Natural killer cell (primary cell): ENCODE measurements at regions of chr7 and their contacts with region 1.

Region 1: GRCh38 chr7:139340037-139340807 is 915 bp upstream of the FMC1 start:
- DNase-seq: peak; percentile 94 to 100
- ATAC-seq: peak; percentile 73 to 91 (median 81)
- H3K4me3 ChIP-seq: peak overlapping the region; percentile 89
- H3K4me3 Mint-ChIP-seq: peak overlapping the region; percentile 98
- H3K27ac ChIP-seq: peak overlapping the region; percentile 98
- H3K27ac Mint-ChIP-seq: peak overlapping the region; percentile 100
- H3K4me1 ChIP-seq: peaks cover 15% of the 10 kb centered on the region
- H3K4me1 Mint-ChIP-seq: peaks cover 28 to 31% of the 10 kb centered on the region in 2 donors
- H3K27me3 ChIP-seq: no peaks in the 10 kb centered on the region
- H3K27me3 Mint-ChIP-seq: peaks cover 4 to 8% of the 10 kb centered on the region in 2 donors
- CTCF ChIP-seq: no peak

Region 2: GRCh38 chr7:139109188-139109982 is 230.8 kb before region 1 on chr7 and contains the start of gene ZC3HAV1:
- intact Hi-C with region 1: loop called (anchors 1 kb)
- DNase-seq: peak; percentile 83 to 97
- ATAC-seq: peak; percentile 80 to 91 (median 83)
- H3K4me3 ChIP-seq: peak within 1 kb of the TSS; percentile 91
- H3K4me3 Mint-ChIP-seq: peak within 1 kb of the TSS; percentile 97
- H3K27ac ChIP-seq: peak within 1 kb of the TSS; percentile 89
- H3K27ac Mint-ChIP-seq: peak within 1 kb of the TSS; percentile 96 to 99
- H3K4me1 ChIP-seq: peaks cover 17% of the 10 kb centered on the region
- H3K4me1 Mint-ChIP-seq: peaks cover 50 to 51% of the 10 kb centered on the region in 2 donors
- H3K27me3 ChIP-seq: no peaks in the 10 kb centered on the region
- H3K27me3 Mint-ChIP-seq: no peaks in the 10 kb centered on the region
- CTCF ChIP-seq: no peak
- total RNA-seq, gene ZC3HAV1: 129 to 153 (median 137) TPM

Region 3: DNA sequence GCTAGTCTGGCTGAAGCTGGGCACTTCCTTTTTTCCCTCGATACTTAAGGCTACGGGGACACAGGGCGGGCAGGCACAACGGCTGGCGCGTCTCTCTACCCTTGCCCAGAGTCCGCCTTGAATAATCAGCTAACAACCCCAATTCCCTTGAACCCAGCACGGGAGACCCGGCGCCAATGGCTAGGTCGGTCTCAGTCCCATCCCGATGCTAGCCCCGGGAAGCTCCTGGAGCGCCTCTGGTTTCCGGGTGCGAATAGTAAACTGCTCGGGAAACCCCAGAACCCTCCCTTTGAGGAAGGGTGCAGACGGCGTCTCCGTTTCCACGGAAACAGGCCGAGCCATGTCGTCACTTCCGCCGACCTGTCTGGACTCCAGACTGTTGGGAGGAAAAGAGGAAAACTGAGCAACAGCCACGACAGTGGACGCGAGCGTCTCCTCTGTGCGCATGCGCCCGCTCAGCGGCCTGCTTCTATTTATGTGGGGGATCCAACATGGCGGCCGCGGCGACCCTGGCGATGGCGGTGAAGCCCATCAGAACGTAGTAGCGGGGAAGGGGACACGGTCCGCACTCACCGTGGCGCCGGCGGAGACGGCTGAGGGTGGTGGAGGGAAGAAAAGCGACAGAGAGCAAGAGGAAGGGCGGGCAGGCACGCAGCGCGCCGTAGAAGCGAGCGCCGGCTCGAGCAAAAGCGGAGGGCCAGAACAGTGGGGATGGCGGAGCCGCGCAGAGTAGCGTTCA is 109.3 kb before region 1 on chr7 and contains the start of gene UBN2:
- intact Hi-C with region 1: loop called (anchors 1 kb)
- DNase-seq: peak; percentile 75 to 95
- ATAC-seq: peak; percentile 73 to 86 (median 78)
- H3K4me3 ChIP-seq: peak within 1 kb of the TSS; percentile 100
- H3K4me3 Mint-ChIP-seq: peak within 1 kb of the TSS; percentile 99
- H3K27ac ChIP-seq: peak within 1 kb of the TSS; percentile 92
- H3K27ac Mint-ChIP-seq: peak within 1 kb of the TSS; percentile 94 to 95
- H3K4me1 ChIP-seq: peaks cover 12% of the 10 kb centered on the region
- H3K4me1 Mint-ChIP-seq: peaks cover 22 to 28% of the 10 kb centered on the region in 2 donors
- H3K27me3 ChIP-seq: no peaks in the 10 kb centered on the region
- H3K27me3 Mint-ChIP-seq: peaks cover 3 to 6% of the 10 kb centered on the region in 2 donors
- CTCF ChIP-seq: no peak
- total RNA-seq, gene UBN2: 17.6 to 33.2 (median 21.2) TPM

Region 4: DNA sequence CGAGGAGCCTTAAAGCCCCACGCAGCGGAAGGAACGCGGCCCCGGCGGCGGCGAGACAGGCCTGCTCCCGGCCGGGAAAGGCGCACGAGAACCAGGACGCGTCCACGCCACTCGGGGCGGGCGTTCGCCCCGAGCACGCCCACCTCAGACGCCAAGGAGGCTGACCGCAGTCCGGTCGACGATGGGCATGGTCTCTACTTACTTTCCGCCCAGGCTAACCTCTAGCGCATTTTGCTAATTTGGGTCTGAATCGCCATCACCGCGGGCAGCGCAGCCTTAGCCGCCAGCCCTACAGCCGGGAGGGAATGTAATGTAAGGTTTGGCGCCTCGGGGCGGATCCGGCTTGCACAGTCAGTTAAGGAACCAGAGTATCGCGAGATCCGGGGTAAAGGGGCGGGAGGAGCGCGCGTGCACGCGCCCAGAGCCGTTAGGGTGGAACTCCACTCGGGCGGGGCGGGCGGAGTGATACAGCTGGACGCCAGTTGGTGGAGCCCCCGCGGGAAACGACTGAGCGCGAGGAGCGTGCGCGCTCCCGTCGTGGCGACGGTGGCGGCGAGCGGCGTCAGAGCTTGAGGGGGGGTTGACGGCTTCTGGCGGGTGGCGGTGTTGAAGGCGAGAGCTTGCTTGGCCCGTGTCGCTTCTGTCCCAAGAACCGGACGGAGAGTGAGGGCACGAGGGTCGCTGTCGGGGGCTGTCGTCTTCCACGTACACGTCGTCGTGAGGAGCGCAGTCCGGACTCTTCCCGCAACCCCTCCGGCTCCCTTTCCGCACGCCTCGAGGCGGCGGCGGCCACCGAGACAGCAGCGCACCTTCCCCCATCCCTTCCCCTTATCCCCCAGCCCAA is 19.4 kb after region 1 on chr7 and contains the start of gene LUC7L2:
- intact Hi-C with region 1: loop called (anchors 1 kb)
- DNase-seq: peak; percentile 98 to 99
- ATAC-seq: peak; percentile 78 to 95 (median 81)
- H3K4me3 ChIP-seq: peak within 1 kb of the TSS; percentile 98
- H3K4me3 Mint-ChIP-seq: peak within 1 kb of the TSS; percentile 98
- H3K27ac ChIP-seq: peak within 1 kb of the TSS; percentile 99
- H3K27ac Mint-ChIP-seq: peak within 1 kb of the TSS; percentile 97 to 98
- H3K4me1 ChIP-seq: peaks cover 17% of the 10 kb centered on the region
- H3K4me1 Mint-ChIP-seq: peaks cover 38 to 40% of the 10 kb centered on the region in 2 donors
- H3K27me3 ChIP-seq: no peaks in the 10 kb centered on the region
- H3K27me3 Mint-ChIP-seq: no peaks in the 10 kb centered on the region
- CTCF ChIP-seq: no peak
- total RNA-seq, gene LUC7L2: 183 to 192 (median 186) TPM

Region 5: GRCh38 chr7:139515266-139515665 is 175.0 kb after region 1 on chr7:
- intact Hi-C with region 1: no loop called
- DNase-seq: no peak
- ATAC-seq: no peak
- H3K4me3 ChIP-seq: no peak overlapping the region
- H3K4me3 Mint-ChIP-seq: no peak overlapping the region
- H3K27ac ChIP-seq: no peak overlapping the region
- H3K27ac Mint-ChIP-seq: no peak overlapping the region
- H3K4me1 ChIP-seq: no peaks in the 10 kb centered on the region
- H3K4me1 Mint-ChIP-seq: no peaks in the 10 kb centered on the region
- H3K27me3 ChIP-seq: no peaks in the 10 kb centered on the region
- H3K27me3 Mint-ChIP-seq: peaks cover 0 to 4% of the 10 kb centered on the region in 2 donors
- CTCF ChIP-seq: no peak

Region 6: GRCh38 chr7:139714163-139714901 is 374.1 kb after region 1 on chr7:
- intact Hi-C with region 1: no loop called
- DNase-seq: no peak
- ATAC-seq: no peak
- H3K4me3 ChIP-seq: no peak overlapping the region
- H3K4me3 Mint-ChIP-seq: no peak overlapping the region
- H3K27ac ChIP-seq: peak overlapping the region; percentile 51
- H3K27ac Mint-ChIP-seq: peak overlapping the region in 1 of 2 donors; percentile 68
- H3K4me1 ChIP-seq: peaks cover 11% of the 10 kb centered on the region
- H3K4me1 Mint-ChIP-seq: peaks cover 42 to 47% of the 10 kb centered on the region in 2 donors
- H3K27me3 ChIP-seq: no peaks in the 10 kb centered on the region
- H3K27me3 Mint-ChIP-seq: no peaks in the 10 kb centered on the region
- CTCF ChIP-seq: no peak